AG04449 (cell line): ENCODE measurements at regions of chrX and their contacts with region 1.

Region 1: DNA sequence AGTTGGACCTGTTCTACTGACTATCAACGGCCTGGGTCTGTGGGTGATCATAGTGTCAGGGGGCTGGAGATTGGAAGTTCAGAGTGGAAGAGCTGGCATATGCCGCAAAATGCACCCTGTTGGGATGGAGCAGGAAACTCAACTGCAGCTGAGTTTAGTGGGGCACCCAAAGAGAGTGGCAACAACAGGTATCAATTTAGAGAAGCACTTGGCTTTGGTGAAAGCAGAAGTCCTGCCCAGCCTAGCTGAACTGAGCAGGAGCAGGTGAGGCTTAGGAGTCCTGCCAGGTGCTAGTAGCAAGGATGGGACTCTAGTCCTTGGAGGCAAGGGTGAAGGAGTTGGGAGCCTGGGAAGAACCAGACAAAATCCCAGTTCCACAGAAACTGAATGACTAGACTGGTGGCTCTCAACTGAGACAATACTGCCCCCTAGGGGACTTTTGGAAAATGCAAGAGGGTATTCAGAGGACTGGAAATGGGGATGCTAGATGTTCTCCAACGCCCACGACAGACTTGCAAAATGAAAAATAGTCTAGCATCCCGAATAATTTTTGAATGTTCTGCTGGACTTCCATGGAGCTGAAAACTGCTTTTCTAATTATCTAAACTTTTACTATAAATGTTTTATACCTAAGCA is 49.4 kb downstream of the RTL9 start:
- DNase-seq: no peak
- H3K4me3 ChIP-seq: no peak overlapping the region
- CTCF ChIP-seq: peak; percentile 40

Region 2: DNA sequence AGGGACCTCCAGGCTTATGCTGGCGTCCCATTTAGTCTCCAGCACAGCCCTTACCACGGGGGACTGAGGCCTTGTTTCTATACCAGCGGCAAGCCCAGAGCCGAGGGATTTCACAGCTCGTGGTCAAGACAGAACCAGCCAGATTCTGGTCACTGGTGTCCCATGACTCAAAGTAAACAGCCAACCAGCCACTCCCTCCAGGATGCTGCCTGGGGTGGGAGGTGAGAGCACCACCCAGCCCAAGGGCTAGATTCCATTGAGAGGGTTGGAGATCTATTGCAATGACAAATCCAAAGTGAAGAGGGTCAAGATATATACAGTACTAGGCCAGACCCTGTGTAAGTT is 234.2 kb before region 1 on chrX:
- CTCF ChIA-PET with region 1: interaction called, 970 read pairs
- POLR2A ChIA-PET with region 1: no interaction called
- DNase-seq: no peak
- H3K4me3 ChIP-seq: no peak overlapping the region
- CTCF ChIP-seq: no peak

Region 3: GRCh38 chrX:110346681-110347080 is 61.3 kb before region 1 on chrX:
- CTCF ChIA-PET with region 1: interaction called, 11 read pairs
- POLR2A ChIA-PET with region 1: interaction called, 3 read pairs
- DNase-seq: no peak
- H3K4me3 ChIP-seq: no peak overlapping the region
- CTCF ChIP-seq: peak; percentile 9

Region 4: DNA sequence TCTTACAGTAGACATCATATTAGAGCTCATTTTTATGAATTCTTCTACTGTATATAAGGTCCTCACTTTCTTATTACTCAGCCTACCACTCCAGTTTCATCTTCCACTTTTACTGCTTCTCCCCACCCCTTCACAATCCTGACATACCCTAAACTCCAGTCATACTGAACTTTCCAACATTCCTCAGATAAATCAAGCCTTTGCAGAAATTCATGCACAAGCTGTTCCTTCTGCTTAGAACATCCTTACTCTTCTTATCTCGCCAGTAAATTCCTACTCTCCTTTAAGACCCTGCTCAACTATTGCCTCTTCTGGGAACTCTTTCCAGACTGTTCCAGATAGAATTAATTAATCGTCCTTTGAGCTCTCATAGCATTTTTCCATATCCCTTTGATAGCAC is 24.6 kb before region 1 on chrX:
- CTCF ChIA-PET with region 1: interaction called, 33 read pairs
- POLR2A ChIA-PET with region 1: no interaction called
- DNase-seq: peak; percentile 60
- H3K4me3 ChIP-seq: no peak overlapping the region
- CTCF ChIP-seq: no peak

Region 5: GRCh38 chrX:110394671-110395070 is 13.4 kb before region 1 on chrX:
- CTCF ChIA-PET with region 1: interaction called, 10 read pairs
- POLR2A ChIA-PET with region 1: no interaction called
- DNase-seq: no peak
- H3K4me3 ChIP-seq: no peak overlapping the region
- CTCF ChIP-seq: no peak

Region 6: DNA sequence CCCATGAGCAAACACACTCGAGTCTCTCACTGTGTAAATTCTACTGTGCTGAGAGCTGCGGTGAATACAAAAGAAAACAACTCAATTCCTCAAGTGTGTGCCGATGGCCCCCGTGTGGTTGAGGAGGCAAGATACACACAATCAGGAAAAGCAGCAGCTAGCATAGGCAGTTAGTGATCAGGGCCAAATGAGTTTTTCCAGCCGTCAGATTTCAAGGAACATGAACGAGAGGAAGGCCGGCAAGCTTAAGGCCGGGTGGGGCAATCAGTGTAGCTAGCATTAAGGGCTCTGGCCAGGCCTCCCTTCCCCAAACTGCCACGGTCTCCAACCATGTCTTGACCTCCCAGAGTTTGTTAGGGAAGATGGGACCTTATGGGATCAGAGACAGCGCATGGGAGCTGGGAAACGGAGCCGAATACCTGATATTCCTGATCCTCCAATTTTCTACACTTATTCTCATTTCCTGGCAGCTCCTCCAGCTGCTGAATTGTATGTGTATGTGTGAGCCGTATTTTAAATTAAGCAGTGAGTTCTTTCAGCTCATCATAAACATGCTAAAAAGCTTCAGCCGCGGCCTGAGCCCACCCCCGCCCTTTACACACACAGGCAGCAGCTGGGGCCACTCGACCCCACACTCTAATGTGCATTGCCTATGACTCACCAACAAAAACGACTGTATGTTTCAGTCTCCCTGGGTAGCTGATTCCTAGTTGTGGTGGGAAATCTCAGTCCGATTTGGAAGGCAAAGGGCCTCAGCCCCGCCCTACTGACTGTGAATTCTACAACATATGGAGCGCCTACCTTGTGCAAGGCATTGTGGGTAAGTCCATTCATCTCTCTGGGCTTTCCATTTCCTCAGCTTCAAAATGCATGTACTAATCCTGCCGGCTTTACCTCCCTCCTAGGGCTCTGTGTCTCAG is 10.5 kb after region 1 on chrX:
- CTCF ChIA-PET with region 1: interaction called, 44 read pairs
- POLR2A ChIA-PET with region 1: interaction called, 6 read pairs
- DNase-seq: no peak
- H3K4me3 ChIP-seq: peak overlapping the region; percentile 30
- CTCF ChIP-seq: peak; percentile 64